Panc1 (cell line): ENCODE measurements at regions of chr2 and their contacts with region 1.

Region 1: GRCh38 chr2:22748909-22749308 is 636.1 kb upstream of the KLHL29 start:
- DNase-seq: no peak
- ATAC-seq: no peak
- H3K4me3 ChIP-seq: no peak overlapping the region
- H3K27ac ChIP-seq: no peak overlapping the region
- H3K4me1 ChIP-seq: no peaks in the 10 kb centered on the region
- H3K27me3 ChIP-seq: no peaks in the 10 kb centered on the region
- CTCF ChIP-seq: no peak

Region 2: GRCh38 chr2:21715887-21716286 is 1033.0 kb before region 1 on chr2:
- CTCF ChIA-PET with region 1: no interaction called
- POLR2A ChIA-PET with region 1: no interaction called
- in situ Hi-C with region 1: no loop called
- intact Hi-C with region 1: no loop called
- DNase-seq: no peak
- ATAC-seq: no peak
- H3K4me3 ChIP-seq: no peak overlapping the region
- H3K27ac ChIP-seq: no peak overlapping the region
- H3K4me1 ChIP-seq: no peaks in the 10 kb centered on the region
- H3K27me3 ChIP-seq: no peaks in the 10 kb centered on the region
- CTCF ChIP-seq: no peak

Region 3: GRCh38 chr2:22601007-22601406 is 147.9 kb before region 1 on chr2:
- CTCF ChIA-PET with region 1: no interaction called
- POLR2A ChIA-PET with region 1: no interaction called
- in situ Hi-C with region 1: no loop called
- intact Hi-C with region 1: no loop called
- DNase-seq: no peak
- ATAC-seq: no peak
- H3K4me3 ChIP-seq: no peak overlapping the region
- H3K27ac ChIP-seq: no peak overlapping the region
- H3K4me1 ChIP-seq: no peaks in the 10 kb centered on the region
- H3K27me3 ChIP-seq: no peaks in the 10 kb centered on the region
- CTCF ChIP-seq: no peak

Region 4: DNA sequence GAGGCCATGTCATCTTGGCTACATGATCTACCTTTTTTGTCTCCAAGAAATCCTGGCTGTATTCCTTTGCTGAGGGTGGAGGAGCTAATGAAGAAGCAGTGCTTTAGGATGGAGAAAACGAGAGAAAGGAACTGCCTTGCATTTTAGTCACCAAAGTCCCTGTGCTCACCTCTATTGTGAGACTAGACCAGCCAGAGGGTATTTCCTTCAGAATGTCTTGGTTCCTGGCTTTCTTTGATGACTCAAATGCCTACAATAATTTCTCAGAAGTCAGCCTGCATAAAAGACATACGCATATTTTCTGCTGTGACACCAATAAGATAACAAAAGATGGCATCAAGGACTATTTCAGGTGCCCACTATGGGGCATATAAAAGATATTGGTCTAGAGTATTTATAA is 1316.4 kb after region 1 on chr2:
- CTCF ChIA-PET with region 1: interaction called, 13 read pairs
- POLR2A ChIA-PET with region 1: no interaction called
- in situ Hi-C with region 1: no loop called
- intact Hi-C with region 1: no loop called
- DNase-seq: no peak
- ATAC-seq: no peak
- H3K4me3 ChIP-seq: no peak overlapping the region
- H3K27ac ChIP-seq: no peak overlapping the region
- H3K4me1 ChIP-seq: no peaks in the 10 kb centered on the region
- H3K27me3 ChIP-seq: no peaks in the 10 kb centered on the region
- CTCF ChIP-seq: no peak